Activated T-helper 1 cell treated with anti-CD3 and anti-CD28 coated beads, Interleukin-12 subunit alpha, Interleukin-12 subunit beta, Interleukin-2, Interleukin-4 antibody, amounts not matched to agents 30 ng/mL and 10 ng/mL and 1 ng/mL, durations not matched to agents 14 hours and 24 hours and 36 hours (primary cell): ENCODE measurements at regions of chr1 and their contacts with region 1.

Region 1: GRCh38 chr1:207321079-207321789 is at the start of gene CD55:
- DNase-seq: peak; percentile 99
- H3K4me3 Mint-ChIP-seq: peak within 1 kb of the TSS; percentile 88
- H3K27ac Mint-ChIP-seq: peak within 1 kb of the TSS; percentile 99
- H3K4me1 Mint-ChIP-seq: peaks cover 33% of the 10 kb centered on the region
- H3K27me3 Mint-ChIP-seq: peaks cover 2% of the 10 kb centered on the region
- total RNA-seq, gene CD55: 177 and 178 TPM in 2 replicates

Region 2: DNA sequence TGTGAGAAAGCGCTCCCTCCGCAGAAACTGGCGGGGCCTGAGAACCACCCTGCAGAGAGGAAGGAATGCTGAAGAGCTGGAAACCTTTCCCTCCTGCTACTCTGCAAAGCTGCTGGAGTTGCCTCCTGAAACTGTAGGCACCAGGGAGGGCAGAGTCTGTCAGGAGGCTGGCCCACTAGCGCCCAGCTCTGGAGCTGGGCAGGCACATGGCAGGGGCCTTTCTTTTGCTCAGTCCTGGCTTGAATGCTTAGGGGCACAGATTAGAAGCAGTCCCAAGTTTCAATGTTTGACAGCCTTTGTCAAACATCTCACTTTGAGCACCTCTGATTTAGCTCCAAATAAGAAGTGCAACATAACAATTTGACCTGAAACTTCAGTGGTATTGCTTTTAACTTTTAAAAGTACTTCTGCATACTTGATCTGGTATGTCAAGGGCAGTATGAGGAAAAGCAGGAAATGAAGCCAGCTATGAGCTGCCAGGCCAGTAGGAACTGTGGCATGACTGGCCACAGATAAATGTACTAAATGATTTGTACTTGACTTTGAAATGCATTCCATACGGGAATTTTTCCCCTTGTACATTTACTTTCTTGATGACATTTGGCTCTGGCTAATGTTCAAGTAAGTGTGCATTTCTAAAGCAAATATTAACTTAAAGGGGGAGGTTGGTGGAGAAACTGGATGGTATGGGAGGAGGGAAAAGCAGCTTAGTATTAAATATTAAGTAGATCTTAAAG is 295.9 kb before region 1 on chr1:
- intact Hi-C with region 1: no loop called
- DNase-seq: no peak
- H3K4me3 Mint-ChIP-seq: no peak overlapping the region
- H3K27ac Mint-ChIP-seq: no peak overlapping the region
- H3K4me1 Mint-ChIP-seq: no peaks in the 10 kb centered on the region
- H3K27me3 Mint-ChIP-seq: peaks cover 20% of the 10 kb centered on the region

Region 3: GRCh38 chr1:207052911-207053769 is 268.1 kb before region 1 on chr1 and contains the start of gene PFKFB2:
- intact Hi-C with region 1: loop called (anchors 1 kb)
- DNase-seq: peak; percentile 90
- H3K4me3 Mint-ChIP-seq: peak within 1 kb of the TSS; percentile 100
- H3K27ac Mint-ChIP-seq: peak within 1 kb of the TSS; percentile 82
- H3K4me1 Mint-ChIP-seq: peaks cover 53% of the 10 kb centered on the region
- H3K27me3 Mint-ChIP-seq: peaks cover 5% of the 10 kb centered on the region
- total RNA-seq, gene PFKFB2: 2.9 and 4.4 TPM in 2 replicates

Region 4: DNA sequence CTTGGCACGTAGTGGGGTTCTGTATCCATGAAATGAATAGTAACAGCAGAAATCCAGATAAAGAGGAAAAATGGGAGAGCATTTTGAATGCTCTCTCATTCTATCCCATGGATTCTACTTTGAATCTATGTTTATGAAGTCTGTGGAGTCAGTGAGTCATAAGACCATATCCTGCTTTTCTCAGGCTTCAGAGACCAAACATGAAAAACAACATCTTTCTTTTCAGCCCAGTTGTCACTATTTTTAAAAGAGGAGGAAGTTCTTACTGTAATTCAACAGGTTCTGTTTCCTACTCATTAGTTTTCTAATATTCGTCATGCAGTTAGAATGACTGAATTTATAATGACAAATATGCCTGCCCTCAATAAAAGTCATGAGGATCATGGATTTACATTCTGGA is 39.2 kb before region 1 on chr1:
- intact Hi-C with region 1: loop called (anchors 2 kb)
- DNase-seq: no peak
- H3K4me3 Mint-ChIP-seq: peak overlapping the region; percentile 55
- H3K27ac Mint-ChIP-seq: peak overlapping the region; percentile 57
- H3K4me1 Mint-ChIP-seq: peaks cover 69% of the 10 kb centered on the region
- H3K27me3 Mint-ChIP-seq: no peaks in the 10 kb centered on the region

Region 5: DNA sequence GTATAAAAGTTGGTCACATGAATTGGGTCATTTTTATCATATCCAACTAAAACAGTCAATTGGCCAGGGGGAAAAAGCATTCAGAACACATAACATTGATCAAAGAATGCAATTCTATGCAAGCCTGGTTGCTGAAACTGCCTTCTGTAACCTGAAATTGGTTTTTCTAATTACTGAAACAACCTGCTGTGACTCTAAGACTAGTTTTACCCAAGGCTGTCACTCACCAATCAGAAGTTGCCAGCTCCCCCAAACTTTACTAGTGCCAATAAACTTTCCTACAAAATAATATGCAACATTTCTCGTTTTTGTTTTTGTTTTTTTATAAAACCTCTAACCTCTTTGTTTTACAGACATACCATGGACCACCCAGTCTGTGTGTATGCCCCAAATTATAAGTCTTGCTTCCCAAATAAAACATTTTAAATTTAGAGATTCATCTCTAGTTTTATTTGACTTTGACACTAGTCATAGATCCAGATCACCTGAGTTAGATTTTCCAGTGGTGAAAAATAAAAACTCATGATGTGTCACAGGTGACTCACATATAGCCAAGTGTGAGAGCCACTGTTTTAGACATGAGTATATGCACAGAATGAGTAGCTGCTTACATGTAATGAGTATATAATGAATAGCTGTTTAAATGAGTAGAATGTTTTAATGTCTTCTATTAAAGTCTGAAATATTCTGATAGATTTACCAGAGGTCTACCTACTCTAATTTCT is 68.7 kb after region 1 on chr1:
- intact Hi-C with region 1: loop called (anchors 1 kb)
- DNase-seq: no peak
- H3K4me3 Mint-ChIP-seq: no peak overlapping the region
- H3K27ac Mint-ChIP-seq: peak overlapping the region; percentile 81
- H3K4me1 Mint-ChIP-seq: peaks cover 7% of the 10 kb centered on the region
- H3K27me3 Mint-ChIP-seq: no peaks in the 10 kb centered on the region

Region 6: DNA sequence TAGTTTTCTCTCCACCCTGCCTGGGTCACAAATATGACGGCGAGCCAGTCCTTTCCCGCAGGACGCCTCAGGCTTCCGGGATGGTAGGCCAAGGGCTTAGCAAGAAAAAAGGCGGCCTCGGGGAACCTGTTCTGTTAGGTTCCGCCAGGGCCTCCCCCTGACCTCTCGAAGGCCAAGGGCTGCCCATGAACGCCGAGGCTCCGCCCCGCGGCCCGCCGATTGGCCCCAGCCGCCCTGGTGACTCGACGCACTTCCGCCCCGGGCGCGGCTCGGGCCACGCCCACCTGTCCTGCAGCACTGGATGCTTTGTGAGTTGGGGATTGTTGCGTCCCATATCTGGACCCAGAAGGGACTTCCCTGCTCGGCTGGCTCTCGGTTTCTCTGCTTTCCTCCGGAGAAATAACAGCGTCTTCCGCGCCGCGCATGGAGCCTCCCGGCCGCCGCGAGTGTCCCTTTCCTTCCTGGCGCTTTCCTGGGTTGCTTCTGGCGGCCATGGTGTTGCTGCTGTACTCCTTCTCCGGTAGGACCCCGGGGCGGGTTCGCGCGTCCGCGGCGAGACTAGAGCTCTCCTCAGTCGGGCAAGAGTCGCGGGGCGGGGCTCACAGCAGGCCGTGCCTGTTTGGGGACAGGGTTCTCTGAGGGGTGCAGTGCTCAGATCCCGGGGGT is 430.7 kb after region 1 on chr1 and contains the start of gene CD46:
- intact Hi-C with region 1: loop called (anchors 10 kb)
- DNase-seq: peak; percentile 93
- H3K4me3 Mint-ChIP-seq: peak within 1 kb of the TSS; percentile 98
- H3K27ac Mint-ChIP-seq: peak within 1 kb of the TSS; percentile 95
- H3K4me1 Mint-ChIP-seq: peaks cover 61% of the 10 kb centered on the region
- H3K27me3 Mint-ChIP-seq: no peaks in the 10 kb centered on the region
- total RNA-seq, gene CD46: 101 and 105 TPM in 2 replicates